CD4-positive, alpha-beta memory T cell (primary cell): ENCODE measurements at regions of chrX and their contacts with region 1.

Region 1: GRCh38 chrX:66004928-66005829 is 34.7 kb downstream of the VSIG4 start:
- DNase-seq: peak in 2 of 5 donors; percentile 22 to 24
- H3K4me3 ChIP-seq: no peak overlapping the region
- H3K4me3 Mint-ChIP-seq: peak overlapping the region; percentile 45 to 87 (median 68)
- H3K27ac ChIP-seq: no peak overlapping the region
- H3K27ac Mint-ChIP-seq: peak overlapping the region; percentile 56 to 89 (median 77)
- H3K4me1 ChIP-seq: peaks cover 71% of the 10 kb centered on the region
- H3K4me1 Mint-ChIP-seq: peaks cover 43 to 75% (median 62%) of the 10 kb centered on the region in 4 donors
- H3K27me3 ChIP-seq: no peaks in the 10 kb centered on the region
- H3K27me3 Mint-ChIP-seq: no peaks in the 10 kb centered on the region

Region 2: DNA sequence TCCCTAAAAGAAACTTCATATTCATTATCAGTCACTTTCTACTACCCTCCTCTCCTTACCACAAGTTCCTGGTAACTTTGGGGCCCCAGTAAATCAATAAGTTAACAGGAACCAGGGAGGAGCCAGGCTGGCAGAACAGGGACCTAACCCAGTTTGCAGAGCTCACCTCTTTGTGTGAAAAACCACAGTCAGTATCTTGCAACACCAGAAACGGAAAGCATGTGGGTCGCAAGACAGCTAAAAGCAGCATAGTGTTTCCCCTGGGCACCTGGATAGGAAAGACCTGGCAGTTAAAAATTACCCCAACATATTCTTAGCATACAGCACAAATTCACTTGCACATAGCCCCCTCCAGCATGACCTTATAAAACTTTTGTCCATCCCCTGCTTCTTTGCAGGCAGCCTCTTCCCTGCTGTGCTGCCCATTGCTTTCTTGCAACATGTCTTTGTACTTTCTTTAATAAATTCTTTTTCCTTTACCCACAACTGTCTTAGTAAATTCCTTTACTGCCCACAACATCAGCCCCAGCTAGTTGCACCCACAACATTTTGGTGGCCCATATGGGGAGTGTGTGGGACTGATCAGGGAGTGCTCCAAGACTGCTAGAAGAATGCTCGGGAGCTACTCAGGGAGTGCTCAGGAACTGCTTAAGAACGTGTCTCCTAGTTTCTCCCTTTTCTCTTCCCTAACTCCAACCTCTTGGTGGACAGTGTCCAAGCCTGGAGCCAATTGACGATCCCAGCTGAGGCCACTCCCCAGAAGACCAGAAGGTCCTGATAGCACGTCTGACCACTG is 254.3 kb before region 1 on chrX:
- CTCF ChIA-PET with region 1: no interaction called
- POLR2A ChIA-PET with region 1: no interaction called
- intact Hi-C with region 1: loop called (anchors 5 kb)
- DNase-seq: peak; percentile 47 to 58 (median 50)
- H3K4me3 ChIP-seq: no peak overlapping the region
- H3K4me3 Mint-ChIP-seq: peak overlapping the region; percentile 2 to 87 (median 78)
- H3K27ac ChIP-seq: peak overlapping the region; percentile 35
- H3K27ac Mint-ChIP-seq: peak overlapping the region; percentile 58 to 85 (median 76)
- H3K4me1 ChIP-seq: peaks cover 42% of the 10 kb centered on the region
- H3K4me1 Mint-ChIP-seq: peaks cover 39 to 69% (median 53%) of the 10 kb centered on the region in 4 donors
- H3K27me3 ChIP-seq: no peaks in the 10 kb centered on the region
- H3K27me3 Mint-ChIP-seq: no peaks in the 10 kb centered on the region

Region 3: GRCh38 chrX:66015152-66015831 is 10.1 kb after region 1 on chrX:
- CTCF ChIA-PET with region 1: interaction called, 4 read pairs
- POLR2A ChIA-PET with region 1: interaction called, 6 read pairs
- intact Hi-C with region 1: loop called (anchors 1 kb)
- DNase-seq: peak in 3 of 5 donors; percentile 10 to 24 (median 11)
- H3K4me3 ChIP-seq: no peak overlapping the region
- H3K4me3 Mint-ChIP-seq: peak overlapping the region; percentile 60 to 87 (median 77)
- H3K27ac ChIP-seq: peak overlapping the region; percentile 21
- H3K27ac Mint-ChIP-seq: peak overlapping the region in 6 of 7 donors; percentile 13 to 79 (median 74)
- H3K4me1 ChIP-seq: peaks cover 89% of the 10 kb centered on the region
- H3K4me1 Mint-ChIP-seq: peaks cover 53 to 98% (median 72%) of the 10 kb centered on the region in 4 donors
- H3K27me3 ChIP-seq: no peaks in the 10 kb centered on the region
- H3K27me3 Mint-ChIP-seq: no peaks in the 10 kb centered on the region